Activated naive CD4-positive, alpha-beta T cell treated with anti-CD3 and anti-CD28 coated beads, Interleukin-2, amount 10 ng/mL, durations not matched to agents 7 days and 5 days (primary cell): ENCODE measurements at regions of chr19 and their contacts with region 1.

Region 1: DNA sequence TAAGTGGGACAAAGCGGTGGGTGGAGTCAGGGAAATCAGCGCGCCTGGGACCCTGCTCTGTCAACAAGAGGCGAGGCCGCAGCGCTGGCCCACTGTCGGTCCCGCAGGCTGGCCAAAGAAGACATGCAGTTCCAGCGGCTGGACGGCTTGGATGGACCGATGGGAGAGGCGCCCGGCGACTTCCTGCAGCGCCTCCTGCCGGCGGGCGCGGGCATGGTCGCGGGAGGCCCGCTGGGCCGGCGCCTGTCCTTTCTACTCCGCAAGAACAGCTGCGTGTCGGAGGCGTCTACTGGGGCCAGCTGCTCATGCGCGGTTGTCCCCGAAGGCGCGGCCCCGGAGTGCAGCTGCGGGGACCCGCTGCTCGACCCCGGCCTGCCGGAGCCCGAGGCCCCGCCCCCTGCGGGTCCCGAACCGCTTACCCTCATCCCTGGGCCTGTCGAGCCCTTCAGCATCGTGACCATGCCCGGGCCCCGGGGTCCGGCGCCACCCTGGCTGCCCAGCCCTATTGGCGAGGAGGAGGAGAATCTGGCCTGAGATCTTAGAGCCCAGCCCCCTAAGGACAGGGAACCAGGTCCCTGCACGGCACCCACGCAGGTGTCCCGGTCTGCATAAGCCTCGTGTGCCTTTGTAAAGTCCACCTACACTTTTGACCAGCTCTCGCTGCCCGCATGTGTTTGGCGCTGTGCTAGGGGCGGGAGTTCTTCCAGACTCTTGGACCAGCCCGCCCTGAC is 6.1 kb downstream of the BEST2 start:
- DNase-seq: peak; percentile 76
- H3K4me3 Mint-ChIP-seq: no peak overlapping the region
- H3K27ac Mint-ChIP-seq: no peak overlapping the region
- H3K4me1 Mint-ChIP-seq: peaks cover 8% of the 10 kb centered on the region
- H3K27me3 Mint-ChIP-seq: peaks cover 63% of the 10 kb centered on the region

Region 2: DNA sequence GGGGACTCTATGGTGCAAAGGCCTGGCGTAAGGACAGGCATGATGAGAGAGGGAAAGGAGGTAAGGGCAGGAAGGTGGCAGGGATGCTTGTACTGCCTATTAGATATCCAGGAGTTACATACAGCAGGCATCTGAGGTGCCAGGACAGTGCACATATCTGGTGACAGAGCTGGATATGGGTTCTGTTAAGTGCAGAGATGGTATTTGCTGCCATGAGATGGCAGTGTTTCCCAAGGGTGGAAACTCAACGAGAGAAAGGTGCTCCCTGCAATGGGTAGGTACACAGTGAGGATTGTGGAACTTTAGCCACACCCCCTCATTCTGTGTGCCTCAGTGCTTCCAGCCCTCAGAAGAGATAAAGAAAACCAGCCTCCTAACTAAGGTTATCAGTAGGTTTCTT is 40.8 kb before region 1 on chr19:
- CTCF ChIA-PET with region 1: interaction called, 35 read pairs
- DNase-seq: peak; percentile 72
- H3K4me3 Mint-ChIP-seq: no peak overlapping the region
- H3K27ac Mint-ChIP-seq: no peak overlapping the region
- H3K4me1 Mint-ChIP-seq: peaks cover 26% of the 10 kb centered on the region
- H3K27me3 Mint-ChIP-seq: no peaks in the 10 kb centered on the region

Region 3: DNA sequence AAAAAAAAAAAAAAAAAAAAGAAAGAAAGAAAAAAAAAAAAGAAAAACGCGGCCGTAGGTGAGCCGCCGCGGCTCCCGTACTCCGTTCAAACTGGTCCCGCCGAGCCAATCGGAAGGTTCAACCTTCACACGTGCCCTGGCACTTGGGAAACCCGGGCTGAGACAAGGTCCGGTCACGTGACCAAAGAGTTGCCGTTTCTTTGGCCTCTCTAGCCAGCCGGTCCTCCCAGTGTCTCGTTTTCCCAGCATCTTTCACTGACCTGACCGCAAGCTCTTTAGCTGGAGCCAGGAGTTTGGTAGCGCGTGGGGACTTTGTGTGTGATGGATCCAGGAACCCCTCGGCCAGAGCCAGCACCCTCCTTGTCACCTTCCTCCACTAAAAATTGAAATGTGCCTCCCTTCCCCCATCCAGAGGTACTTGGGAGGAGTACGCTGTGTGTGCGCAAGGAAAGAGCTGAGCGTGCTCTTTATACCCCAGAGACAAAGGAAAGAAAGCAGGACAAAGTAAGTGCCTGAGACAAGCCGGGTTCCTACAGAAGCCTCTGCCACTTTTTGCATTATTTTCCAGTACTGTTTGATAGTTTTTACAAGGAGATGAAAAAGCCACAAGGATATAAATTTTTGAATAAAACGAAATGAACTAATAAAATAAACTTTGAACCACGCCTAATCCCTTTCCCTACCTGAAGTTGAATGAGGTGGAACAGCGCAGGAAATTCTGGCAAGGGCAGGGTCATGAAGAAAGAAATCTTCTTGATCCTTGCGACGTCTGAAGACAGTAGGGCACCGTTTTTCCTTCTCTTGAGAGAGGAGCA is 34.9 kb before region 1 on chr19:
- CTCF ChIA-PET with region 1: interaction called, 35 read pairs
- DNase-seq: peak; percentile 97
- H3K4me3 Mint-ChIP-seq: peak overlapping the region; percentile 82
- H3K27ac Mint-ChIP-seq: peak overlapping the region; percentile 91
- H3K4me1 Mint-ChIP-seq: peaks cover 41% of the 10 kb centered on the region
- H3K27me3 Mint-ChIP-seq: peaks cover 4% of the 10 kb centered on the region

Region 4: DNA sequence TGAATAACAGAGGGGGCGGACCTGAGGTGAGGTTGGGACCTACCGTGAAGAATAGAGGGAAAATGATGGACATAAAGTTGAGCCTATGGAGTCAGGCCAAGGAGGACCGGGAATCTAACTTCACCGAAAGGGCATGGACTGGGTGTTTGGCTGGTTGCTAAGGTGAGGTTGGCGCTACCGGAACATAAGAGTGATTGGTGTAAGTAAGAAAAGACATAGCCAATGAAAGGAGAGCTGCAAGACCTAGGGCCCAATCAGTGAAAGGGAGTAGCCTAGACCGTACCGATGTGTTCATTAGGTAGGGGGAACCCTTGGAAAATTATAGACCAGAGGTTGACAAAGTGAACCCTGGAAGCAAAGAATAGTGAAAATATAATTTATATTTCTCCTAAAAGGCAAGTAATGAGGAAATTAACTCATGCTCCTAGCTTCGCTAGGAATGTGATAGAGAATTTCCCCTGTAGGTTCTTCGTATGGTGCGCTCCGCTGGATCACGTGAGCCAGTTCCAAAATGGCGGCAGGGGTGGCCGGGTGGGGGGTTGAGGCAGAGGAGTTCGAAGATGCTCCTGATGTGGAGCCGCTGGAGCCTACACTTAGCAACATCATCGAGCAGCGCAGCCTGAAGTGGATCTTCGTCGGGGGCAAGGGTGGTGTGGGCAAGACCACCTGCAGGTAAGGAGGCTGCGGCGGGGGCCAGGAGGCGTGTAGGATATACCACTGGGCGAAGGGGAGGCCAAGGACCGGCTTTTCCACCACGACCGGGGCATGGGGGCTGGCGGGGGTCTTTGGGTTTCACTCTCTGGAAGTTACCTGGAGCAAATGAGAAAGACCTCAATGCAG is 20.5 kb before region 1 on chr19 and contains the start of gene GET3:
- CTCF ChIA-PET with region 1: interaction called, 27 read pairs
- DNase-seq: peak; percentile 88
- H3K4me3 Mint-ChIP-seq: peak within 1 kb of the TSS; percentile 100
- H3K27ac Mint-ChIP-seq: peak within 1 kb of the TSS; percentile 92
- H3K4me1 Mint-ChIP-seq: peaks cover 45% of the 10 kb centered on the region
- H3K27me3 Mint-ChIP-seq: no peaks in the 10 kb centered on the region

Region 5: GRCh38 chr19:12777217-12778016 is 19.7 kb after region 1 on chr19:
- CTCF ChIA-PET with region 1: interaction called, 13 read pairs
- DNase-seq: peak; percentile 85
- H3K4me3 Mint-ChIP-seq: peak overlapping the region; percentile 80
- H3K27ac Mint-ChIP-seq: peak overlapping the region; percentile 77
- H3K4me1 Mint-ChIP-seq: peaks cover 51% of the 10 kb centered on the region
- H3K27me3 Mint-ChIP-seq: peaks cover 12% of the 10 kb centered on the region

Region 6: DNA sequence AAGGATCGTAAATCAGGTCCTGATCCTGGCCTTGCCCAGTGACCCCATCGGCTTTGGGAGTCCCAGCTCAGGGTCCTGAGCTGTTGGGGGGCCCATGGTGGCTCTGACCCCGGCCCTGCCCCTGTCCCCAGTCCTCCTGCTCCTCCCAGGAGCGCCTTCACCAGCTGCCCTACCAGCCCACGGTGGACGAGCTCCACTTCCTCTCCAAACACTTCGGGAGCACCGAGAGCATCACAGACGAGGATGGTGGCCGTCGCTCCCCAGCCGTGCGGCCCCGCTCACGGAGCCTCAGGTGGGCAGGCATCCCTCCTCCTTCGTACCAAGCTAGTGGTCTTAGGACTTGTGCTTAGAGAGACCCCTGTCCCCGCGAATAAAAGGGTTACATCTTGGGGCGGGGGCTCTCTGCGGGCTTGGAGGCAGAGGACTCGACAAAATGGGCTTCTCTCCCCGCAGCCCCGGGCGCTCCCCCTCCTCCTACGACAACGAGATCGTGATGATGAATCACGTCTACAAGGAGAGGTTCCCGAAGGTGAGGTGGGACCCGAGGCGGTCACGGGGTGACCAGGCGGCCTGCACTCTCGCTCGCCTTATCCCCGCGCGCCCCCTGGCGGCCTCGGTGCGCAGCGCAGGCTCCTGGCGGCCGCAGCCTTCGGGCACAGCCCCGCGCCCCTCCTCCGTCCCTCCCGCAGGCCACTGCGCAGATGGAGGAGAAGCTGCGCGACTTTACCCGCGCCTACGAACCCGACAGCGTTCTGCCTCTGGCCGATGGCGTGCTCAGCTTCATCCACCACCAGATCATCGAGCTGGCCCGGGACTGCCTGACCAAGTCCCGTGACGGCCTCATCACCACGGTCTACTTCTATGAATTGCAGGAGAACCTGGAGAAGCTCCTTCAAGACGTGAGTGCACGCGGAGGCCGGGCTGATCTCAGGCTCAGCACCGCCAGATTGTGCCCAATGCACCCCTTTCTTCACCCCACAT is 89.7 kb after region 1 on chr19:
- CTCF ChIA-PET with region 1: interaction called, 225 read pairs
- DNase-seq: peak; percentile 87
- H3K4me3 Mint-ChIP-seq: peak overlapping the region; percentile 12
- H3K27ac Mint-ChIP-seq: no peak overlapping the region
- H3K4me1 Mint-ChIP-seq: peaks cover 9% of the 10 kb centered on the region
- H3K27me3 Mint-ChIP-seq: peaks cover 68% of the 10 kb centered on the region